ENCODE measurements at regions of chr19 and their contacts with region 1.

Region 1: GRCh38 chr19:43595999-43596841 is at the starts of genes IRGQ and ZNF576:
- DNase-seq: peak; percentile 100
- ATAC-seq: peak; percentile 74 to 88 (median 79)
- H3K4me3 ChIP-seq: peak within 1 kb of the TSS; percentile 64
- H3K4me3 Mint-ChIP-seq: peak within 1 kb of the TSS; percentile 97
- H3K27ac ChIP-seq: peak within 1 kb of the TSS; percentile 89
- H3K27ac Mint-ChIP-seq: peak within 1 kb of the TSS; percentile 98 to 100
- H3K4me1 ChIP-seq: peaks cover 35% of the 10 kb centered on the region
- H3K4me1 Mint-ChIP-seq: peaks cover 44 to 47% of the 10 kb centered on the region in 2 donors
- H3K27me3 ChIP-seq: no peaks in the 10 kb centered on the region
- H3K27me3 Mint-ChIP-seq: no peaks in the 10 kb centered on the region
- CTCF ChIP-seq: no peak
- total RNA-seq, gene IRGQ: 28.5 to 43.7 (median 32.2) TPM
- total RNA-seq, gene ZNF576: 4.0 to 10.4 (median 5.8) TPM

Region 2: DNA sequence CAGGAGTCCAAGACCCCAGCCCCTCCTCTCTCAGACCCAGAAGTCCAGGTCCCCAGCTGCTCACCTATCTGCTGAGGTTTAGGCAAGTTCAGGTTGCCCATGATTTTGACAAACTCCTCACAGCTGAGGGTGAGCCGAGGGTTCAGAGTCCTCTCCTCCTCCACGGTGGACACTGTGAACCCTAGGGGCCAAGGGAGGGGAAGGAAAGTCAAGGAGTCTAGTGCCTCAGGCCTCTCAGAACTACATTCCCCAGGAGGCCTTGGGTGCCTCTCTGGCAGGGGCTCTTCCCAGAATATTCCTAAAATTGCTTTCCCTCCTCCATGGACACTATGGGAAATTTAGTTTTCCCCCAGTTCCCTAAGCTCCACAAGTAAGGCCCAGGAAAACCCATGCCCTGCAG is 88.3 kb before region 1 on chr19:
- intact Hi-C with region 1: no loop called
- DNase-seq: no peak
- ATAC-seq: no peak
- H3K4me3 ChIP-seq: no peak overlapping the region
- H3K4me3 Mint-ChIP-seq: peak overlapping the region; percentile 37
- H3K27ac ChIP-seq: no peak overlapping the region
- H3K27ac Mint-ChIP-seq: peak overlapping the region in 1 of 2 donors; percentile 29
- H3K4me1 ChIP-seq: peaks cover 17% of the 10 kb centered on the region
- H3K4me1 Mint-ChIP-seq: peaks cover 21 to 24% of the 10 kb centered on the region in 2 donors
- H3K27me3 ChIP-seq: no peaks in the 10 kb centered on the region
- H3K27me3 Mint-ChIP-seq: no peaks in the 10 kb centered on the region
- CTCF ChIP-seq: no peak

Region 3: DNA sequence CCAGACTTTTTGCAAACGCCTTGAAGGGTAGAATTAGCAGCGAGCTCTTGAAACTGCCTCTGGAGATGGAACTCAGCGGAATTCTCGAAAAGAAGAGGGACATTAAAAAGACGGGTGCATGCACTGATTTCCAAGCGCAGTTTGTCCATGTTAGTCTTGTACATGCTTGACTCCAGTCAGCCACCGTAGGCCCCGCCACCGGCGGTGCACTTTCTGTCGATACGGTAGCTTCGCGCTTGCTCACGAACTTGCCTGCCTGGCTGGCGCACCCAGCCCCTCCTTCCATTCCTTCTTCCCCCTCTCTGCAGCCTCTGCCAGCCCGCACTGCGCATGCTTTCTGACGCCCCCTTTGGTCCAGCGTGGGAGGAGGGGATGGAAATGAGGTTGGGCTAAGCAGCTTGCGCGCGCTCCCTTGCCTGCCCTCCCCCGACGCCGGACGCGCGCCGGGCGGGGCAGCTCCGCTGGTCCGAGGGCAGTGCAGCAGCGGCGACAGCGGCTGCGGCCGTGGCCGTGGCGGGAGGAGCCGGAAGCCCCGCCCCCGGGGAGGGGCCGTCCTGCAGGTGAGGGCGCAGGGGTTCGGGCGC is 63.2 kb before region 1 on chr19 and contains the start of gene ZNF575:
- intact Hi-C with region 1: loop called (anchors 1 kb)
- DNase-seq: peak; percentile 68 to 92
- ATAC-seq: peak; percentile 39 to 64 (median 54)
- H3K4me3 ChIP-seq: peak within 1 kb of the TSS; percentile 78
- H3K4me3 Mint-ChIP-seq: peak within 1 kb of the TSS; percentile 97
- H3K27ac ChIP-seq: peak within 1 kb of the TSS; percentile 77
- H3K27ac Mint-ChIP-seq: peak within 1 kb of the TSS; percentile 90 to 93
- H3K4me1 ChIP-seq: peaks cover 23% of the 10 kb centered on the region
- H3K4me1 Mint-ChIP-seq: peaks cover 30 to 34% of the 10 kb centered on the region in 2 donors
- H3K27me3 ChIP-seq: no peaks in the 10 kb centered on the region
- H3K27me3 Mint-ChIP-seq: no peaks in the 10 kb centered on the region
- CTCF ChIP-seq: no peak
- total RNA-seq, gene ZNF575: 1.9 to 5.4 (median 3.9) TPM

Region 4: GRCh38 chr19:43562698-43563241 is 33.5 kb before region 1 on chr19:
- intact Hi-C with region 1: loop called (anchors 1 kb)
- DNase-seq: peak; percentile 81 to 93
- ATAC-seq: peak; percentile 88 to 96 (median 92)
- H3K4me3 ChIP-seq: no peak overlapping the region
- H3K4me3 Mint-ChIP-seq: peak overlapping the region; percentile 83
- H3K27ac ChIP-seq: peak overlapping the region; percentile 96
- H3K27ac Mint-ChIP-seq: peak overlapping the region; percentile 89 to 96
- H3K4me1 ChIP-seq: peaks cover 44% of the 10 kb centered on the region
- H3K4me1 Mint-ChIP-seq: peaks cover 50 to 54% of the 10 kb centered on the region in 2 donors
- H3K27me3 ChIP-seq: no peaks in the 10 kb centered on the region
- H3K27me3 Mint-ChIP-seq: no peaks in the 10 kb centered on the region
- CTCF ChIP-seq: no peak

Region 5: DNA sequence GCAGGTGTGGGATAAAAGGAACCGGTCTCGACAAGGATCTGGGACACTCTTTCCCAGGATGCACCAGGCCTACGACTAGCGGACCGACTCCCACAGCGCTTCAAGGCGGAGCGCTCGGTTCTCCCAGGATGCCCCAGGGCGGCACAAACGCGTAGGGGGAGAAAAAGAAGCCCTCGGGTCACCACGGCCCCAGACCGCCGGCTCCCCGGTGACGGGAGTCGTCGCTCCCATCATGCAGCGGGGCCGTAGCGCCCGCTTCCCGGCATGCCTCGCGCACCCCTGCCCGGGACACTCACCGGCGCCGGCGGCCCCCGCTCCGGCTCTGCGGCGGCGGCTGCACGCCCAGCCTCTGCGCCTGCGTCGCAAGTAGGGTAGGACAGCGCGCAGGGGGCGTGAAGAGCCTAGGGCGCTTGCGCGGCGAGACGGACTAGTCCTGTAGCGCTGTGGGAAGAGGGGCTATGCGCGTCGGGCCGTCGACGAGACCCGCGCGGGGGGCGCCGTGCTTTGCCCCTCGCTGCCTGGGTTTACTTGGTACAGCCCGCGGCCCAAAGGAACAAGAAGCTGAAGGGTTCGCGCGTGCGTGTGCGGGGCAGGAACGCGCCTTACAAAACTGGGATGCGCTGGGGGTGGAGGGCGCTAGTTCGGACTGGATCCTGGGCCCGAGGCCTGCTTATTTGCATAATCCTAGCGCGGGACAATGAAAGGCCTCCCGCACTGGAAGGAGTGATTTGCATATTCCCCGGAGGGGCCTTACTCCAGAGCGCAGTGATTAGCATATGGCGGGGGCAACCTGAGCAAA is 23.2 kb after region 1 on chr19 and contains the start of gene ZNF428:
- intact Hi-C with region 1: loop called (anchors 1 kb)
- DNase-seq: peak; percentile 81 to 94
- ATAC-seq: peak; percentile 92 to 95 (median 92)
- H3K4me3 ChIP-seq: peak within 1 kb of the TSS; percentile 100
- H3K4me3 Mint-ChIP-seq: peak within 1 kb of the TSS; percentile 99
- H3K27ac ChIP-seq: peak within 1 kb of the TSS; percentile 96
- H3K27ac Mint-ChIP-seq: peak within 1 kb of the TSS; percentile 93 to 96
- H3K4me1 ChIP-seq: peaks cover 18% of the 10 kb centered on the region
- H3K4me1 Mint-ChIP-seq: peaks cover 27 to 52% of the 10 kb centered on the region in 2 donors
- H3K27me3 ChIP-seq: no peaks in the 10 kb centered on the region
- H3K27me3 Mint-ChIP-seq: no peaks in the 10 kb centered on the region
- CTCF ChIP-seq: no peak
- total RNA-seq, gene ZNF428: 36.3 to 50.5 (median 37.6) TPM

Measured in natural killer cell (primary cell).